ENCODE measurements at regions of chr14 and their contacts with region 1.

Region 1: DNA sequence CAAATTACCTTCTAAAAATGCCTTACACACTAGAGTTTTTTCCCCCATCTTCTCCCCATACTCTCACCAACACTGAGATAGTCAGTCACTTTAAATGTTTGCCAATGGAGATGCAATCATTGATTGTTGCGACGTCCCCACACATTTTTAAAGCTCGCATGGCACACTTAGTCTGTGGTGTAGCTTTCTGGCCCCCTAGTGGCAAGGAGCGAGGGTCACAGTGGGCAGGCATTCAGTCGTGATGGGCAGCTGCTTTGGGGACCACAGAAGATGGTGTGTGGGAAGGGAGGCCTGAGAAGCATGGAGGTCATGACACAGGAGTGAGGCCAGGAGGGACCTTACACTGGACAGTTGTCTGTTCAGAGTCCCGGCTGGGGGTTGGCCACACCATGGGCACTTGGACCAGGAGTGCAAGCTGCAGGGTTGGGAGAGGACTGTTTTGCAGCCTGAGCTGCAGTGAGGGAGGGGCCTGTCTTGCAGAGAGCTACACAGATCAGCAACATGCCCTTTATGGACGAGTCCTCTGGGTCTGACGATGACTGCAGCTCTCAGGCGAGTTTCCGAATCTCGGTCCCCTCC is 28.7 kb downstream of the PIGH start:
- DNase-seq: peak; percentile 55 to 67
- ATAC-seq: peak; percentile 92 to 98
- H3K4me3 ChIP-seq: no peak overlapping the region
- H3K27ac ChIP-seq: no peak overlapping the region
- H3K4me1 ChIP-seq: no peaks in the 10 kb centered on the region
- CTCF ChIP-seq: peak; percentile 80
- EP300 ChIP-seq: no peak
- POLR2A ChIP-seq: no peak
- RAD21 ChIP-seq: peak; percentile 74 to 86

Region 2: GRCh38 chr14:67514650-67515385 is 56.5 kb before region 1 on chr14:
- CTCF ChIA-PET with region 1: interaction called, 15 read pairs
- POLR2A ChIA-PET with region 1: no interaction called
- DNase-seq: peak in 1 of 2 experiments; percentile 45
- ATAC-seq: peak; percentile 54 to 65; a peak in 5 of 6 replicates
- H3K4me3 ChIP-seq: peak overlapping the region; percentile 78
- H3K27ac ChIP-seq: peak overlapping the region; percentile 63 to 88
- H3K4me1 ChIP-seq: no peaks in the 10 kb centered on the region
- CTCF ChIP-seq: no peak
- EP300 ChIP-seq: no peak
- POLR2A ChIP-seq: no peak
- RAD21 ChIP-seq: no peak

Region 3: DNA sequence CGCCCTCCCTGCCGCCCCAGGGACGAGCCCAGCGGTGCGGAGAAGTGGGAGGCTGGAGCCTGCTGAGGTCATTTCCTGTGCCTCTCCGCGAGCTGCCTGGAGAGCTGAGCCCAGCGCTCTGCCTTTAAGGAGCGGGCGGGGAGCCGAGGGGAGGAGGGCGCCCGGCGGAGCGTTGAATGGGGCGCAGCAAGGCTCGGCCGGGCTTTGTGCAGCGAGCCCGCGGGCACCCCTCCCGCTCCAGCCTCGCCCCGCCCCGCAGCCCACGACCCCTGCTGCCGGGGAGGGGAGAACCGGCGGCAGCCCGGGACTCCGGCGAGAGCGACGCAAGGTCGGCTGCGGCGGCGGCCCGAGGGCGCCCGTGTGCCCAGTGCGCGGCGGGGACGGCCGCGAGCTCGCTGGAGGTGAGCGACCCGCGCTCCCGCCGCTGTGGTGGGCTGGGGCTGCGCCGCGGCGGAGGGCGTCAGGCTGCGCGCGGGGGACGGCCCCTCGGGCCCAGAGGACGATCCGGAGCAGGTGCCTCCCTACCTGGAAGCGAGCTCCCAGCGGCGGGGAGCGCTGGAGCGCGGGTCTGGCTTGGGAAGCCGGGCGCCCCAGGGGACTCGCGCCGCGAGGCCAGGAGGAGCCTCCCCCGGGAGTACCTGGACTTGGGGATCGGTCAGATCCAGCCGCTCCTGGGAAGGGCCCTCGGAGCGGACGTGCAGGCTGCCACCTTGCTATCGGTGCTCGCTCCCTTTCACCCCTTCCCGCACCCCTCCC is 38.2 kb before region 1 on chr14 and contains the start of gene PLEKHH1:
- CTCF ChIA-PET with region 1: interaction called, 100 read pairs
- POLR2A ChIA-PET with region 1: no interaction called
- DNase-seq: peak; percentile 77 to 87
- ATAC-seq: peak; percentile 96 to 97
- H3K4me3 ChIP-seq: peak within 1 kb of the TSS; percentile 83
- H3K27ac ChIP-seq: peak within 1 kb of the TSS; percentile 83 to 90
- H3K4me1 ChIP-seq: 0 out of 3 replicates have a peak, but pooled peaks cover 3% of the 10 kb centered on the region
- CTCF ChIP-seq: no peak
- EP300 ChIP-seq: no peak
- POLR2A ChIP-seq: peak; percentile 82
- RAD21 ChIP-seq: no peak
- polyA plus RNA-seq, gene PLEKHH1: 5.1 and 6.7 TPM in 2 replicates

Region 4: GRCh38 chr14:67551940-67552339 is 19.4 kb before region 1 on chr14:
- CTCF ChIA-PET with region 1: interaction called, 97 read pairs
- POLR2A ChIA-PET with region 1: no interaction called
- DNase-seq: no peak
- ATAC-seq: no peak
- H3K4me3 ChIP-seq: no peak overlapping the region
- H3K27ac ChIP-seq: no peak overlapping the region
- H3K4me1 ChIP-seq: peaks cover 3% of the 10 kb centered on the region; the same call in 1 of the 3 replicates
- CTCF ChIP-seq: no peak
- EP300 ChIP-seq: no peak
- POLR2A ChIP-seq: no peak
- RAD21 ChIP-seq: no peak

Region 5: GRCh38 chr14:67583711-67584644 is 12.6 kb after region 1 on chr14:
- CTCF ChIA-PET with region 1: interaction called, 73 read pairs
- POLR2A ChIA-PET with region 1: no interaction called
- DNase-seq: peak; percentile 56 to 81
- ATAC-seq: peak; percentile 93 to 96
- H3K4me3 ChIP-seq: no peak overlapping the region
- H3K27ac ChIP-seq: no peak overlapping the region
- H3K4me1 ChIP-seq: no peaks in the 10 kb centered on the region
- CTCF ChIP-seq: peak; percentile 80
- EP300 ChIP-seq: no peak
- POLR2A ChIP-seq: no peak
- RAD21 ChIP-seq: peak; percentile 80 to 88

Measured in A549 (cell line).